Activated CD4-positive, alpha-beta T cell treated with anti-CD3 and anti-CD28 coated beads for 36 hours (primary cell): ENCODE measurements at regions of chr6 and their contacts with region 1.

Region 1: GRCh38 chr6:15776458-15776980 is 113.7 kb upstream of the DTNBP1 start:
- DNase-seq: peak; percentile 71
- ATAC-seq: peak; percentile 89
- H3K4me3 Mint-ChIP-seq: peak overlapping the region; percentile 59
- H3K27ac Mint-ChIP-seq: peak overlapping the region; percentile 92
- H3K4me1 Mint-ChIP-seq: peaks cover 73% of the 10 kb centered on the region
- H3K27me3 Mint-ChIP-seq: no peaks in the 10 kb centered on the region

Region 2: DNA sequence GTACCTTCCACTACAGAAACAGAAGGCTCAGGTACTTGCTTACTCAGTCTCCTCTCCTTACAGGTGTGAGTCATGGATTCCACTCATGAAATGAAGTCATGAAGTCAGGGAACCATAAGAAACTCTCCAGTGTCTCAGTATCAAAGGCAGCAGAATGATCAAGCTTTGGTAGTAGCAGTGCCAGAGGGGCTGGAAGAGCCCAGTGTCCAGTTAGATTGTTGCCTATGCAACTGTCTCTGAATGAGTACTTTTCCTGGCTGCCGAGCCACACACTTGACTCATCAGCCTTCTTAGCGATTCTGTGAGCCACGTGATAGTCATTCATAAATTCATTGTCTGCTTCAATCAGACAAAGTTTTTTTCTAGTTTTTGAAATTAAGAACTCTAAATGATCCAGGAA is 61.5 kb before region 1 on chr6:
- CTCF ChIA-PET with region 1: no interaction called
- POLR2A ChIA-PET with region 1: no interaction called
- intact Hi-C with region 1: loop called (anchors 1 to 2 kb)
- DNase-seq: peak; percentile 70
- ATAC-seq: peak; percentile 97
- H3K4me3 Mint-ChIP-seq: no peak overlapping the region
- H3K27ac Mint-ChIP-seq: peak overlapping the region; percentile 86
- H3K4me1 Mint-ChIP-seq: peaks cover 26% of the 10 kb centered on the region
- H3K27me3 Mint-ChIP-seq: peaks cover 6% of the 10 kb centered on the region

Region 3: DNA sequence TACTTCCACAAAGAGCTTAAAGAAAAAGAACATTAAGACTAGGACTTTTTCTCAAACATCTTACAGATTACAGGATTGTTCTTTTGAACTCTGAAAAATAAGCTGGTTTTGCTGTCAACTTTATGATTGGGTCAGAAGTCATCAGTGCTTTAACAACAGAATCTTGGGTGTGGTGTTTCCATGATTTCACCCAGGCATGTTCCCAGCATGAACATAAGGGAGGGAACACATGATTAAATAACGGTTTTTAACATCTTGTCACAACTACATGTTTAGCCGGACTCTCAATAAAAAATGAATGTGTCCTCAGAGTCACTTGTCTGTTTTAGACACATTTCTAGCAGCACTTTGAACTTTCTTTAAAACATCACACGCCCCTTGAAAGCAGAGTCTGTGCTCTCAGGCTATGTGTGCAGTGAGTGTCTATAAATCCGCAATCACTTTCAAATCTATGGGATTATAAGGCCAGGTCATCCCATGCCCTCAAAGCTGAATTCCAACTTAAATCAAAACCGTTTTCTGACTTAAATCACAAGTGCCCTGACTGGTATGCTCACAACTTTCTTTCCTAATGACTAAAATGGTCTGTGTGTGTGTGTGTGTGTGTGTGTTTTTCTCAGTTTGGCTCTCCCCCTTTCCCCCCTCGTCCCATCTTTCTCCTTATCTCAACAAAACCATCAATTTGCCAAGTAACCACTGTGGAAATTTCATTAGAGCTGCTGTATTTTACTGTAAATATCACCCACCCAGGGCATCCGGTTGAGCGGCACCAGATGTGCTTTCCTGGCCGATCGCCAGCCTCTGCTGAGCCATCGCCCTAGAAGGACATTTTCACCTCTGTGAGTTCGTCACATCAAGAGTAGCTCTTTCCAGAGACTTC is 103.1 kb after region 1 on chr6:
- CTCF ChIA-PET with region 1: interaction called, 5 read pairs
- POLR2A ChIA-PET with region 1: interaction called, 9 read pairs
- intact Hi-C with region 1: loop called (anchors 1 kb)
- DNase-seq: peak; percentile 87
- ATAC-seq: peak; percentile 71
- H3K4me3 Mint-ChIP-seq: peak overlapping the region; percentile 18
- H3K27ac Mint-ChIP-seq: peak overlapping the region; percentile 52
- H3K4me1 Mint-ChIP-seq: peaks cover 42% of the 10 kb centered on the region
- H3K27me3 Mint-ChIP-seq: no peaks in the 10 kb centered on the region

Region 4: DNA sequence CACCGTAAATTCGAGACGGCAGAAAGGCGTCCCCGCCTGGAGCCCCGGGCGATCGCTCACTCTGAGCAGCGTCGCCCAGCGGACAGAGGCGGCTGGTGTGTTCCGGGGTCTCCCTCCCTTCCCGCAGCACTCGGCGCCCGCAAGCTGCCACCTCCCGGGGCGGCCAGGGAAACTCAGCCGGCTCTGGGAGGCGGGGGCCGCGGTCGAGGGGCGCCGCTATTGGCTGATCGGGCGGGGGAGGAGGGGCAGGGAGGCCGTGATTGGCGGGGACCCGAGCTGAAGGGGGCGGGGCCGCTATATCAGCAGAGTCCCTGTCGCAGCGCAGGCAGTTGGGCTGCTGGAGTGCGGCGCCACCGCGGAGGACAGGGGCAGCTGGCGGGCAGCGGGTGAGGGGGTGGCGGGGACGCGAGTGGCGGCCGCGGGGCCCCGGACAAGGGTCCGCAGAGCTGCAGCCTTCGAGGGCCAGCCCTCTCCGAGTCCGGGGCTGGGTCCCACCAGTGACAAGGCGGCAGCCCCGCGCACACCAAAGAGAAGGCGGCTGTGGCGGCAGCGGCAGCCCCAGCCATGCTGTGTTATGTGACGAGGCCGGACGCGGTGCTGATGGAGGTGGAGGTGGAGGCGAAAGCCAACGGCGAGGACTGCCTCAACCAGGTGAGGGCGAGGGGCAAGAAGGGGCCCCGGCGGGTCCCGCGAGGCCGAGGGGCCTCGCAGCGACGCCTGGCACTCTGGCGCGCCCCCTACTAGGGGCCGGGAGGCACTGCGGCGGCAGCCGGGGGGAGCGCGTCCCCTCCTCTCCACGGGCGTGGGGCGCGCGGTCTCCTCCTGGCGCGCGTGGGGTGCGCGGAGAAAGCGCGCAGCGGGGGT is 352.5 kb after region 1 on chr6 and contains the start of gene MYLIP:
- CTCF ChIA-PET with region 1: interaction called, 3 read pairs
- POLR2A ChIA-PET with region 1: interaction called, 11 read pairs
- intact Hi-C with region 1: loop called in 1 of 2 experiments (anchors 1 kb)
- DNase-seq: peak; percentile 98
- ATAC-seq: peak; percentile 82
- H3K4me3 Mint-ChIP-seq: peak within 1 kb of the TSS; percentile 90
- H3K27ac Mint-ChIP-seq: peak within 1 kb of the TSS; percentile 86
- H3K4me1 Mint-ChIP-seq: peaks cover 24% of the 10 kb centered on the region
- H3K27me3 Mint-ChIP-seq: no peaks in the 10 kb centered on the region
- total RNA-seq, gene MYLIP: 9.2 to 10.6 TPM

Region 5: GRCh38 chr6:16471222-16471909 is 694.8 kb after region 1 on chr6:
- CTCF ChIA-PET with region 1: no interaction called
- POLR2A ChIA-PET with region 1: no interaction called
- intact Hi-C with region 1: loop called in 1 of 2 experiments (anchors 5 kb)
- DNase-seq: peak; percentile 36
- ATAC-seq: peak; percentile 45
- H3K4me3 Mint-ChIP-seq: no peak overlapping the region
- H3K27ac Mint-ChIP-seq: peak overlapping the region; percentile 60
- H3K4me1 Mint-ChIP-seq: peaks cover 79% of the 10 kb centered on the region
- H3K27me3 Mint-ChIP-seq: no peaks in the 10 kb centered on the region